ENCODE measurements at regions of chr11 and their contacts with region 1.

Region 1: GRCh38 chr11:92886243-92886905 is 83.1 kb upstream of the MTNR1B start:
- DNase-seq: no peak
- ATAC-seq: peak; percentile 82

Region 2: GRCh38 chr11:92211576-92212167 is 674.7 kb before region 1 on chr11:
- intact Hi-C with region 1: loop called (anchors 5 kb)
- DNase-seq: no peak
- ATAC-seq: peak; percentile 56

Region 3: GRCh38 chr11:92735039-92735438 is 151.3 kb before region 1 on chr11:
- intact Hi-C with region 1: loop called (anchors 10 kb)
- DNase-seq: no peak
- ATAC-seq: no peak

Region 4: GRCh38 chr11:92852946-92853345 is 33.4 kb before region 1 on chr11:
- intact Hi-C with region 1: no loop called
- DNase-seq: no peak
- ATAC-seq: peak; percentile 37

Measured in Right ventricle myocardium inferior (tissue), 1 donor.